ENCODE measurements at regions of chr2 and their contacts with region 1.

Region 1: GRCh38 chr2:225122583-225123486 is 80.6 kb upstream of the DOCK10 start:
- DNase-seq: no peak
- H3K4me3 ChIP-seq: no peak overlapping the region
- H3K27ac ChIP-seq: no peak overlapping the region
- H3K4me1 ChIP-seq: no peaks in the 10 kb centered on the region
- H3K27me3 ChIP-seq: no peaks in the 10 kb centered on the region
- CTCF ChIP-seq: no peak
- POLR2A ChIP-seq: no peak

Region 2: GRCh38 chr2:225244949-225245348 is 122.1 kb after region 1 on chr2:
- intact Hi-C with region 1: no loop called
- DNase-seq: no peak
- H3K4me3 ChIP-seq: no peak overlapping the region
- H3K27ac ChIP-seq: no peak overlapping the region
- H3K4me1 ChIP-seq: no peaks in the 10 kb centered on the region
- H3K27me3 ChIP-seq: no peaks in the 10 kb centered on the region
- CTCF ChIP-seq: no peak
- POLR2A ChIP-seq: no peak

Region 3: GRCh38 chr2:225650041-225650440 is 527.2 kb after region 1 on chr2:
- intact Hi-C with region 1: loop called (anchors 10 kb)
- DNase-seq: no peak
- H3K4me3 ChIP-seq: no peak overlapping the region
- H3K27ac ChIP-seq: no peak overlapping the region
- H3K4me1 ChIP-seq: no peaks in the 10 kb centered on the region
- H3K27me3 ChIP-seq: no peaks in the 10 kb centered on the region
- CTCF ChIP-seq: no peak
- POLR2A ChIP-seq: no peak

Measured in vagina (tissue), 2 donors.